HEK293 (cell line): ENCODE measurements at regions of chr9 and their contacts with region 1.

Region 1: GRCh38 chr9:128034821-128035764 is 32.0 kb downstream of the NAIF1 start:
- H3K4me3 ChIP-seq: no peak overlapping the region
- H3K27ac ChIP-seq: no peak overlapping the region
- H3K4me1 ChIP-seq: no peaks in the 10 kb centered on the region
- CTCF ChIP-seq: peak; percentile 51; the same call in 1 of the 2 replicates

Region 2: DNA sequence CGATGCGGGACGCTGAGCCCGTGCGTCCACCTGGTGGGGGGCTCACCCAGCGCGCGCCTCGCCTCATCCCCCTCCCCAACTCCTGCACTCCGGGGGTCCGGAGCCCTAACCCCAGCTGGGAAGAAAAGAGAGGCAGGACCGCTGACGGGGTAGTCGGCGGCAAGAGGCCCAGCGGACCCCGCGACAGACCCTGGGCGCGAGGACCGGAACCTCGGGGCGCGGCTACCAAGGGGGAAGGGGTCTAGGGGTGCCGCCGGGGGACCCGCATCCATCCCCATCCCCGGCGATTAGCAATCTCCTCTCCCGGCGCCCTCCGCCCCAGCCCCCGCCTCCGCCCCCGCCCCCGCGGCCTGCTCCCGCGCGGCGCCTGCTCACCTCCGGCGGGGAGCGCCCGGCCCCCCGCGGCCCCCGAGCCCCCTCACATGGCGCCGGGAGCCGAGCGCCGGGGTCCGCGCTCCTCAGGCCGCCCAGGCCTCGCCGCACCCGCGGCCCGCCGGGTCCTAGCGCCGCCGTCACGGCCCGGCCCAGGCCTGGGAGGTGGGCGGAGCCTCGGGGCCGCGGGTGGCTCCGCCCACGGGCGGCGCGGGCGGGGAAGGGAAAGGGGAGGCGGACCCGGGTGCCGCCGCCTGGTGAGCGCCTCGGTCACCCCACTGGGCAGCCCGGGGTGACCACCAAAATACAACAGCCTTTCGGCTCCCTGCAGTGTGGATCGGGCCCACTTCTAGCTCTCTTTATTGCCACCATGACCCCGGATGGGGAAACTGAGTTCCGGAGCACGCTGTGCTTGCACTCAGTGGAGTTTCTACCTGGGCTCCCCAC is 135.8 kb before region 1 on chr9 and contains the start of gene ST6GALNAC6:
- CTCF ChIA-PET with region 1: no interaction called
- POLR2A ChIA-PET with region 1: no interaction called
- H3K4me3 ChIP-seq: peak within 1 kb of the TSS; percentile 86
- H3K27ac ChIP-seq: peak within 1 kb of the TSS; percentile 78; the same call in 1 of the 2 replicates
- H3K4me1 ChIP-seq: no peaks in the 10 kb centered on the region
- CTCF ChIP-seq: no peak

Region 3: GRCh38 chr9:127937388-127938280 is 97.5 kb before region 1 on chr9 and contains the start of gene DPM2:
- CTCF ChIA-PET with region 1: interaction called, 165 read pairs
- POLR2A ChIA-PET with region 1: no interaction called
- H3K4me3 ChIP-seq: peak within 1 kb of the TSS; percentile 58
- H3K27ac ChIP-seq: peak within 1 kb of the TSS; percentile 45; the same call in 1 of the 2 replicates
- H3K4me1 ChIP-seq: 0 out of 2 replicates have a peak, but pooled peaks cover 2% of the 10 kb centered on the region
- CTCF ChIP-seq: no peak

Region 4: DNA sequence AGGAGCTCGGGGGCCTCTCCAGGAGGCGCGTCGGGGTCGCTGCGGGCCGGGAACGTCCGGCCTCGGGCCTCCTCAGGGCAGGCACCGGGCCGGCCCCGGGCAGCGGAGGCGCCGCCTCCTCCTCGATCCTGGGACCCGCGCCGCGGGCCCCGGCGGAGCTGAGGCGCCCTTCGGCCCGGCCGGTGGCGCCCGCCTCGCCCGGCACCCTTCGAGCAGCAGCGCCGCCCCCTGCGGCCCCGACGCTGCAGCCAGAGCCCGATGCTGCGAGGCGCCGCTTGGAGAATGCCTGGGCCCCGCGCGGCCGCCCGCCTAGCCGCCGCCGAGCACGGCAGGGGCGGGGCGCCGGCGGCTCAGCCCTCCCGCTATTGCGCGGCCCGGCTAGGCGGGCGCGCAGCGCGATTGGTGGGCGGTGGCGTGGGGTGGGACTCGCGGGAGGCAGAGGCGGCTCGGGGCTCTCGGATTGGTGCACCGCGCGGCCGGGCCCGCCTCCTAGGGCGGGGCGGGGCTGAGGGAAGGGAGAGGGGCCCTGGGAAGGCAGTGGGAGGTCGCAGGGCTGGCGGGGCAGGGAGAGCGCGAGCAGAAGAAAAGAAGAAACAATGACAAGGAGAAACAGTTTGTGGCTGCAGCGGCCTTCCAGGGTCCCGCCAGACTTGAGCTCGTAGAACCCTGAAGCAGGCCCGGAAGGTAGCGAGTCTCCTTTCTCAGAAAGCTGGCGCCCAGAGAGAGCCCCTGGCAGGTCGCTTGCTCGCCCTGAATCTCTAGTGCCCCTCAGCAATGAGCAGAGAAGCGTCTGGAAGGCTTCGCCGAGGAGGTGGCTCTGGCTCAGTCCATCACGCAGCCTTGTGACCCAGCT is 54.2 kb before region 1 on chr9 and contains the start of gene EEIG1:
- CTCF ChIA-PET with region 1: interaction called, 37 read pairs
- POLR2A ChIA-PET with region 1: no interaction called
- H3K4me3 ChIP-seq: peak within 1 kb of the TSS; percentile 66
- H3K27ac ChIP-seq: peak within 1 kb of the TSS; percentile 81
- H3K4me1 ChIP-seq: peaks cover 6% of the 10 kb centered on the region; the same call in 1 of the 2 replicates
- CTCF ChIP-seq: no peak

Region 5: GRCh38 chr9:128020692-128021091 is 14.4 kb before region 1 on chr9:
- CTCF ChIA-PET with region 1: interaction called, 28 read pairs
- POLR2A ChIA-PET with region 1: no interaction called
- H3K4me3 ChIP-seq: no peak overlapping the region
- H3K27ac ChIP-seq: no peak overlapping the region
- H3K4me1 ChIP-seq: no peaks in the 10 kb centered on the region; the same call in 1 of the 2 replicates
- CTCF ChIP-seq: no peak

Region 6: GRCh38 chr9:128067876-128068613 is 33.0 kb after region 1 on chr9 and contains the start of gene SLC25A25:
- CTCF ChIA-PET with region 1: interaction called, 14 read pairs
- POLR2A ChIA-PET with region 1: no interaction called
- H3K4me3 ChIP-seq: peak within 1 kb of the TSS; percentile 80
- H3K27ac ChIP-seq: peak within 1 kb of the TSS; percentile 77
- H3K4me1 ChIP-seq: peaks cover 2% of the 10 kb centered on the region; the same call in 1 of the 2 replicates
- CTCF ChIP-seq: peak; percentile 28; the same call in 1 of the 2 replicates